AG04450 (cell line): ENCODE measurements at regions of chr3 and their contacts with region 1.

Region 1: GRCh38 chr3:100089812-100090668 is 24.3 kb downstream of the FILIP1L start:
- DNase-seq: peak; percentile 27
- H3K4me3 ChIP-seq: no peak overlapping the region
- H3K27ac ChIP-seq: peak overlapping the region; percentile 33
- H3K27me3 ChIP-seq: no peaks in the 10 kb centered on the region
- CTCF ChIP-seq: peak; percentile 77

Region 2: DNA sequence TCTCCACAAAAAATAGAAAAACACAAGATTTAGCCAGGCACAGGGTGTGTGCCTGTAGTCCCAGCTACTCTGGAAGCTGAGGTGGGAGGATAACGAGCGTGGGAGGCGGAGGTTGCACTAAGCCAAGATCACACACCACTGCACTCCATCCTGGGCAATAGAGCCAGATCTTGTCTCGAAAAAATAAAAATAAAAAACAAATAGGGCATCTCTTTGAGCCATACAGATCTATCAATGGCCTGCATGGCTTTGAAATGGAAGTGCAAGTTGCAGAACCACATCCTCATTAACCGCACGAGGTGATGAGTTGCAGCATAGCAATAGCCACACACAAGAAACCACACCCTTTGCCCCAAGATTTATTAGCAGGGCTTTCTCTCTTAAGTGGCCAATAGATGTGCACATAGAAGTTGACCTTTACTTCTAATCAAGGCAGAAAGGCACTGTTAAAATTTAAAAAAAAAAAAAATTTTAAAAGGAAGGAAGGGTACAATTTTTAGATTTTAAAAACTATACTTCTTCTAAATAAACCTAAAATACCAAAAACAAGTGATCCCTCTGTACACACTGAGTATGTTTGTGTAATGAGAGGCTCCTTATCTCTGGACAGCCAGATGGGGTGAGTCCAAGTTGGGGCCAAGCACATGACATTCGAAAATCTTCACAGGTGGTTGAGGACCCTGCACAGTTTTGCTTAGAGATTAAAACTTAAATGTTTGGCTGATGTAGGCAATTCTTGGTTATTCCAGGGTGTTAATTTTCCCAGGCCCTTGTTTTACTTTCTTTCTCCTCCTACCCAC is 29.2 kb before region 1 on chr3:
- CTCF ChIA-PET with region 1: no interaction called
- POLR2A ChIA-PET with region 1: no interaction called
- DNase-seq: no peak
- H3K4me3 ChIP-seq: no peak overlapping the region
- H3K27ac ChIP-seq: no peak overlapping the region
- H3K27me3 ChIP-seq: no peaks in the 10 kb centered on the region
- CTCF ChIP-seq: no peak

Region 3: DNA sequence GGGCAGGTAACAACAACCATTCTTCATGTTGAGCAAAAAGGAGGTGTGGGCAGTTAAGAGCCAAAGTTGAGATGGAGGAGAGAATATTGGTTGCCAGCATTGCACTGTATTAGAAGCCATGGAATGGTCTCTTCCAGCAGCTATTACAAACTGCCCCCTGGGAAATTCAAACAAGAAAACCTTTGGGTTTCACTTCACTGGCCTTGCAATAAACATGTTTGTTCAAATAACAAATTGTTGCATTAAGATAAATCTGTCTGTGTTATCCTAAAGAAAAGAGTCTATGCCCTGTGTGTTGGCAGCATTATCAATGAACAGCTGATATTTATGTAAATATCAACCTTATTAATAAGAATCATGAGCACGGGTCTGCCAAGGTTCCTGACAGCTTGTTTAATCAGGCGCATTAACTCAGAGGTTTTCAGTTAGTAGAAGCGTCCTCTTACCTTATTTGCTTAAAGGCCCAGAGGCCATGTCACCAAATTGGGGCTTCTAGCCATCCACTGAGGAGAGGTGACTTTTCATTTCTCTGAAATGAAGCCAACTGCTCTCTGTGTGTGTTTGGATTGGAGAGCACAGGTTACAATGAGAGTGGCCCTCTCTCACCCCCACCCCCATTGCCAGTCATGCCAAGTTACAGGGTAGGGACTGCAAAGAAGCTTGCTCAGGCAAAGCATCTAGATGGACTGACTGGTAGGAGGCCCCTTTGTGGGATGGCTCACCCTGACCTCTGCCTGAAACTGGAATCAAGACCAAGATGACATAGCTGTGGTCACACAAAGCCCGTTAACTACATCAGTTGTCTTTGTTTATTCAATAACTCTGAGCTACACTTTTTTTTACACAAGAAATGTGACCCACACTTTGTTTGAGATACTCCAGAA is 13.8 kb after region 1 on chr3:
- CTCF ChIA-PET with region 1: interaction called, 11 read pairs
- POLR2A ChIA-PET with region 1: interaction called, 3 read pairs
- DNase-seq: peak; percentile 72
- H3K4me3 ChIP-seq: no peak overlapping the region
- H3K27ac ChIP-seq: peak overlapping the region; percentile 74
- H3K27me3 ChIP-seq: no peaks in the 10 kb centered on the region
- CTCF ChIP-seq: no peak